ENCODE measurements at regions of chr4 and their contacts with region 1.

Region 1: DNA sequence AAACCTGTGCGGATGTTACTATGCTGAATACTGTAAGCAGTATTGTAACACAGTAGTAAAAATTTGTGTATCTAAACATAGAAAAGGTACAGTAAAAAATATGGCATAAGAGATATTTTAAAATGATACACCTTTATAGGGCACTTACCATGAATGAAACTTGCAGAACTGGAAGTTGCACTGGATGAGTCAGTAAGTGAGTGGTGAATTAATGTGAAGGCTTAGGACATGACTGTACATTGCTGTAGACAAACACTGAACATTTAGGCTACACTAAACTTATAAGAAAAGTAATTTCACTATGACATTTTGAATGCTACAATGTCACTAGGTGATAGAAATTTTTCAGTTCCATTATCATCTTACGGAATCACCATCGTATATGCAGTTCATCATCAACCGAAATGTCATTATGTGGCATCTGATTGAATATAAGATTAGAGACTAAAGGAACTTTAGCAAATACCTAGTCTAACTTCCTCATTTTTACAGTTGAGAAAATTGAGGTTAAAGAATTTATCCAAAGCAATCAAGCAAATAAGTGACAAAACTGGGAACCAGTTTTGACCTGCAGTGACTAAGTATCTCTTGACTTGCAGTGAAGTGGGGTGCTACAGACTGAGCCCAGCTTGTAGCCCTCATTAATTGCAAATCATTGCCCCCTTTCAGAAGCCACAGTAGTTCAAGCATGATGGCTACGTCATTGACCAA is 55.3 kb downstream of the EGF start:
- DNase-seq: no peak
- ATAC-seq: peak in 1 of 4 donors; percentile 20
- H3K4me3 ChIP-seq: no peak overlapping the region
- H3K27ac ChIP-seq: no peak overlapping the region
- H3K4me1 ChIP-seq: no peaks in the 10 kb centered on the region
- H3K27me3 ChIP-seq: no peaks in the 10 kb centered on the region
- CTCF ChIP-seq: no peak

Region 2: DNA sequence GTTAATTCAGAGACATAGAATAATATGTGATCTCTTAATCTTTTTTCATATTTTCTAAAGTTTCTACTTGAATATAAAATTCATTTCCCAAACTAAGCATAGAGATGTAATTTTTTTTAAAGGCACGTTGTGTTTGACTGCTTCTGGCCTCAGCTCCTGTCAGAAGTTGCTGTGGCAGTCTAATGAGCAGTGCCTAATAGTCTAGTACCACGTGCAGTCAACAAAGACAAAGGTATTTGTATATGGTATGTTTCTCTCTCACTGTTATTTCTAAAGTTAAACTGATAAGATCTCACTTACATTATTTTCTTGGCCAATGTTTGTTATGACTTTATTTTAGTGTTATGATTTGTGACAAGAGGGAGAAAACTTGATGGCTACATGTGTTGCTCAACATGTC is 456.5 kb before region 1 on chr4:
- intact Hi-C with region 1: loop called in 1 of 2 experiments (anchors 10 kb)
- DNase-seq: no peak
- ATAC-seq: no peak
- H3K4me3 ChIP-seq: no peak overlapping the region
- H3K27ac ChIP-seq: no peak overlapping the region
- H3K4me1 ChIP-seq: no peaks in the 10 kb centered on the region
- H3K27me3 ChIP-seq: no peaks in the 10 kb centered on the region
- CTCF ChIP-seq: no peak

Region 3: DNA sequence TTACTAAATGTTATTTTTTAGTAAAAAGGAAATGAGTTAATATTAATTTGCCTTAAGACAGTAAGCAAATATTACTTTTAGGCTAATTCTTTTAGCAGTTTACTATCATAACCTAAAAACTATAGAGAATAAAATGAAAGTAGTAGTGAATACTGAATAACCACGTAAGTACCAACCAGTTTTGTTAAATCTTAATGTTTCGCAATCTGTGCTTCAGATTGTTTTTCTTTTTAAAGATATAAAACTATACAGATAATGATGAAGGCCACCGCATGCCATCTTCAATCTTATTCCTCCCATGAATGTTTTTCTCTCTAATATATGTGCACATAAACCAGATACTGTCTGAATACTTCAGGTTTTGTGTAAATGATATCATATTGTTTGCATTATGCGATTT is 134.2 kb before region 1 on chr4:
- intact Hi-C with region 1: loop called in 1 of 2 experiments (anchors 5 kb)
- DNase-seq: no peak
- ATAC-seq: no peak
- H3K4me3 ChIP-seq: no peak overlapping the region
- H3K27ac ChIP-seq: no peak overlapping the region
- H3K4me1 ChIP-seq: no peaks in the 10 kb centered on the region
- H3K27me3 ChIP-seq: no peaks in the 10 kb centered on the region
- CTCF ChIP-seq: no peak

Region 4: GRCh38 chr4:110622841-110623717 is 655.1 kb after region 1 on chr4 and contains the start of gene PITX2:
- intact Hi-C with region 1: no loop called
- DNase-seq: peak; percentile 97
- ATAC-seq: peak; percentile 77 to 93 (median 87)
- H3K4me3 ChIP-seq: peak within 1 kb of the TSS; percentile 75
- H3K27ac ChIP-seq: peak within 1 kb of the TSS; percentile 99
- H3K4me1 ChIP-seq: peaks cover 10% of the 10 kb centered on the region
- H3K27me3 ChIP-seq: peaks cover 0 to 14% (median 0%) of the 10 kb centered on the region in 3 donors
- CTCF ChIP-seq: no peak
- total RNA-seq, gene PITX2: 15.7 to 57.9 (median 43.6) TPM

Measured in psoas muscle (tissue), 8 donors.